OCI-LY7 (cell line): ENCODE measurements at regions of chr5 and their contacts with region 1.

Region 1: GRCh38 chr5:150409638-150410523 is 2.8 kb downstream of the CD74 start:
- DNase-seq: peak; percentile 84
- H3K4me3 ChIP-seq: peak overlapping the region; percentile 99
- H3K27ac ChIP-seq: peak overlapping the region; percentile 97
- H3K4me1 ChIP-seq: peaks cover 71% of the 10 kb centered on the region
- CTCF ChIP-seq: no peak

Region 2: DNA sequence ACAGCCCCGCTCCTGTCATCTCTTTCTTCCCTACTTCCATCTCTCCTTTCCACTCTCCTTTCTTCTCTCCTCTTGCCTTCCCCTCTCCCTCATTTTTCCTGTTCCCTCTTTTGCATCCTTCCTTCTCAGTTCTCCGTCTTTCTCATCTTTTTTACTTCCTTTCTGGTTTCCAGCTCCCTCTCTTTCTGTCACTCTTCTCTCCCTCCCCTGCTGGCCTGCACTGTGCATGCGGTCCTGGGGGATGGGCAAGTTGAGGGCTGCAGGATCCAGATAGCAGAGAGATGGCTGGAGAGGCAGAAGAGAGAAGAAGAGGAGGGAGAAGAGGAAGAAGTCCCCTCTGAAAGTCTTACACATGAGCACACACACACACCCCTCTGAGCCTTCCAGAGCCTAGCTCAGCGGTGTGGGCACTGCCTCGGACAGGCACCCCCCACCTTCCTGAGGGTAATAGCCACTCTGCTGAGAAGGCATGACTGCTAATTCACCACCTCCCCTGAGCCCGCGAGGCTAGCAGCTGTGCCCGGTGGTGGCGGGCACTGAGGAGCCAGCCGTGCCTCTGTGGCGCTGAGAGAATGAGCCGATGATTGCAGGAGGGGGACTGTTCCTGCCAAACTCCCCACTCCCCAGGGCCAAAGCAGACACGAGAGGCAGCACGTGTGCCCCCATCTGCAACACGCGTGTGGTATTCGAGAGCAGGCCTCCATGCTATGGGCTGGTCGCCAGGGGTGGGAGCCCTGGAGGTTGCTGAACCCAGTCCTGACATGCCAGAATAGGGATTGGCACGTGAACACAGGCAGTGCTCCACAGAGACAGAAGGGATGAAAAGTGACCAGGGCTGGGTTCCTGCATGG is 116.6 kb before region 1 on chr5:
- CTCF ChIA-PET with region 1: no interaction called
- POLR2A ChIA-PET with region 1: no interaction called
- intact Hi-C with region 1: no loop called
- DNase-seq: no peak
- H3K4me3 ChIP-seq: no peak overlapping the region
- H3K27ac ChIP-seq: no peak overlapping the region
- H3K4me1 ChIP-seq: no peaks in the 10 kb centered on the region
- CTCF ChIP-seq: no peak

Region 3: GRCh38 chr5:150357326-150358260 is 52.3 kb before region 1 on chr5 and contains the start of gene TCOF1:
- CTCF ChIA-PET with region 1: no interaction called
- POLR2A ChIA-PET with region 1: interaction called, 4 read pairs
- intact Hi-C with region 1: loop called (anchors 1 kb)
- DNase-seq: peak; percentile 99
- H3K4me3 ChIP-seq: peak within 1 kb of the TSS; percentile 93
- H3K27ac ChIP-seq: peak within 1 kb of the TSS; percentile 54
- H3K4me1 ChIP-seq: peaks cover 38% of the 10 kb centered on the region
- CTCF ChIP-seq: no peak
- total RNA-seq, gene TCOF1: 61.3 and 62.9 TPM in 2 replicates

Region 4: DNA sequence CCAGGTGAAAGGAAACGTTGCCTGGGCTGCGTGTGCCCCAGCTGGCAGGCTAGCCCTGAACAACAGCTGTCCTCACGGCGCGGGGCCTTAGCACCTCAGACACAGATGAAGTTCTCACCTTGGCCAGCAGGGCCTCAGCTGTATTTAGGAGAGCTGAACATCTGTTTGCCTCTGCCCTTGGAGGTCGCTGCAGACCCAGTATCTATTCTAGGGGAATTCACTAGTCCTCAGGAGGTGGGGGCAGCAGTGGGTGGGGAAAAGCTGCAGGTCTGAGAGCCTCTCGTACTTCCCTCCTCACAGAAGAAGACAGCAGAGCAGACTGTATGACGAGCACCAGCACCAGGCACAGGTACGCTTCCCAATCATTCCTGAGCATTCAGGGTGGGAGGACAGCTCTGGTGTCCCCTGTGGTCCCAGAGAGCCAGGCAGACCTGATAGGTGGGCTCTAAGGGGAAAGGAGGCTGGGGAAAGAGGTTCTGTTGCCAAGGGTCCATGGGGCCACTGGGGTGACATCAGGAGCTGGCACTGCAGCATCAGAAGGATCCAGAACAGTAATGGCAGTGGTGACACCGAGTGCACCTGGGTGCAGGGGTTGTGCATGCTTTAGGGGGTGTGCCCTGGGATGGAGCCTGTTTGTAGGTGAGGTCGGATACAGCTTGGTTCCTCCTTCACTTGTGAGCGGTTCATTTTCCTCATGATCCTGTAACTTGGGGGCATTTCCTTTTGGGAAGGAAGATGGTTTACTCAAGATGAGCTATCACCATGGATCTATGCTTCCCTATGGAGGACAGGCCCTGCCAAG is 11.0 kb before region 1 on chr5:
- CTCF ChIA-PET with region 1: interaction called, 10 read pairs
- POLR2A ChIA-PET with region 1: interaction called, 33 read pairs
- intact Hi-C with region 1: no loop called
- DNase-seq: peak; percentile 89
- H3K4me3 ChIP-seq: no peak overlapping the region
- H3K27ac ChIP-seq: peak overlapping the region; percentile 36
- H3K4me1 ChIP-seq: peaks cover 29% of the 10 kb centered on the region
- CTCF ChIP-seq: peak; percentile 91

Region 5: DNA sequence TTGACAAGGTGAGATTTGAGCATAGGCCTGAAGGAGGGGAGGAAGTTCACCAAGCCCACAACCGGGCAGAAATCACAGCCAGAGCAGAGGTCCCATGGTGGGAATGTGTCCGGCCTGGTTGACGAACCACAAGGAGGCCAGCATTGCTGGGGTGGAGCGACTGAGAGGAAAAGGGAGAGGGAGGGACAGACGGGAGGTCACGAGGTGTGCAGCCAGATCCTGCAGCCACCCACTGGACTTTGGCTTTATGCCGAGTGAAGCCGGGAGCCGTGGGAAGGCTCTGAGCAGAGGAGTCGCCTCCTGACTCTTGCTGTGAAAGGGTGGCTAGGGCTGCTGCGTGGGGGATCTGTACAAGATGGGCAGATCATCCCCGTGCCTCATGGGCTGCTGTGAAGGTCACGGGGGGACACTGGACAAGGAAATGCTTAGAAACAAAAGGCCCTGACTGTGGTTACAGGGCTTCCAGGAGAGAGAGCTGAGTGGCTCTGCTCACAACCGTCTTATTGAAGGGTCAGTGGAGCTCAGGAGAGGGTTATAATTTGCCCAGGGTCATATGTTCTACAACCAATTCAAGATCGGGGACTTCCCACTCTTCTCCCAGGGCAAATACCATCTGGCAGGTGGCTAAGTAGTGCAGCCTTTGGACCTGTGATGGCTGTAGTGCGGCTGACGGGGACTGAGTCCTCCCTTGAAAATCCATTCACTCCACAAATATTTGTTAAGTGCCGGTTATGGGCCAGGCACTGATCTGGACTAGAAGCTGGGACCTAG is 18.4 kb after region 1 on chr5:
- CTCF ChIA-PET with region 1: interaction called, 3 read pairs
- POLR2A ChIA-PET with region 1: interaction called, 38 read pairs
- intact Hi-C with region 1: no loop called
- DNase-seq: no peak
- H3K4me3 ChIP-seq: no peak overlapping the region
- H3K27ac ChIP-seq: no peak overlapping the region
- H3K4me1 ChIP-seq: peaks cover 7% of the 10 kb centered on the region
- CTCF ChIP-seq: no peak

Region 6: GRCh38 chr5:150436141-150436680 is 26.3 kb after region 1 on chr5:
- CTCF ChIA-PET with region 1: interaction called, 5 read pairs
- POLR2A ChIA-PET with region 1: interaction called, 24 read pairs
- intact Hi-C with region 1: loop called (anchors 1 kb)
- DNase-seq: peak; percentile 94
- H3K4me3 ChIP-seq: no peak overlapping the region
- H3K27ac ChIP-seq: no peak overlapping the region
- H3K4me1 ChIP-seq: peaks cover 11% of the 10 kb centered on the region
- CTCF ChIP-seq: peak; percentile 95

Region 7: GRCh38 chr5:150636401-150637244 is 226.7 kb after region 1 on chr5:
- CTCF ChIA-PET with region 1: no interaction called
- POLR2A ChIA-PET with region 1: no interaction called
- intact Hi-C with region 1: no loop called
- DNase-seq: no peak
- H3K4me3 ChIP-seq: no peak overlapping the region
- H3K27ac ChIP-seq: no peak overlapping the region
- H3K4me1 ChIP-seq: no peaks in the 10 kb centered on the region
- CTCF ChIP-seq: no peak

Region 8: DNA sequence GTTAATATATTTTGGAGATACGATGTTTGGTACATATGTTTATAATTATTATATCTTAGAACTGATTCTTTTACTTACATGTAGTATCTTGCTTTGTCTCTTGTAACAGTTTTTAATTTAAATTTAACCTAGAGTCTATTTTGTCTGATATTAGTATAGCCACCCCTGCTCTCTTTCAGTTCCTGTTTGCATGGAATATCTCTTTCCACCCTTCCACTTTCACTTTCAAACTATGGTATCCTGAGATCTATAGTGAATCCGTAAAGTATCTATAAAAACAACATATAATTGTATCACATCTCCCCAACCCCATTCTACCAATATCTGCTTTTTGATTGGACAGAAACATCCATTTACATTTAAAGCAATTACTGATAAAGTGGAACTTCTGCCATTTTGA is 443.7 kb after region 1 on chr5:
- CTCF ChIA-PET with region 1: no interaction called
- POLR2A ChIA-PET with region 1: no interaction called
- intact Hi-C with region 1: no loop called
- DNase-seq: no peak
- H3K4me3 ChIP-seq: no peak overlapping the region
- H3K27ac ChIP-seq: no peak overlapping the region
- H3K4me1 ChIP-seq: no peaks in the 10 kb centered on the region
- CTCF ChIP-seq: no peak

Region 9: DNA sequence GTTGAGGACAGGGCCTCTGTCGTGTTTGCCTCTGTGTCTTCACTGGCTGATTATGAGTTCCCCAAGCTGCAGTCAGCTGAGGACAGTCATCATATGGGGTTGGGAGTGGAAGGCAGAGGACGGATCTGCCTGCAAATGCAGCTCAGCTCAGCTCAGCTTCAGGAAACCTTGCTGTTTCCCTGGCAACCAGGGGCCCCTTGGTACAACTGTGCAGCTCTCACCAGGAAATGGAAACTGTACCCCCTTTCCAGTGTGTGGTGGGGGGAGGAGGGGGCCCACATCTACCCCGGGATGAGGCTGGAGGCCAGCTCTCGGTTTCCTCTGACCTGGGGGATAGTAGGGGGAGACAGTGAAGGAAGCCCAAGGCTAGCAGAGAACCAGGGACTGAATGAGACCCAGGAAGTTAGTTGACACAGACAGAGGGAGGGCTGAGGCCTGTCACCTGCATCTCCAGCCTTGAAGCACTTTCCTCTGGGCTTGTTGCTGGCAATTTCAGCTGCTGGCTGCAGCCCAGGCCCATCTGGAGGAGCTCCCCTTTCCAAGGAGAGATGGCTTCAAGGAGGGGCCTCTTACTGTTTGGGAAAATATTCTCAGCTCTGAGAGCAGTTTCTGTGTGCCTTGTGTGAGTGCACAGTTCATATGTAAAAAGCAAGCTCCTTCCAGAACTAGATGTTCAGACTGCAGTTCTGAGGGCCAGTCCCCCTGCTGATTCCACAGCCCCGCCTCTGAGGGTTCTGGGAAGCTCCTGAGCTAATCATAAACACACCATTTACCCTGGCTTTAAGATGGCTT is 740.8 kb after region 1 on chr5:
- CTCF ChIA-PET with region 1: no interaction called
- POLR2A ChIA-PET with region 1: interaction called, 3 read pairs
- intact Hi-C with region 1: loop called (anchors 5 kb)
- DNase-seq: peak; percentile 81
- H3K4me3 ChIP-seq: peak overlapping the region; percentile 31
- H3K27ac ChIP-seq: peak overlapping the region; percentile 90
- H3K4me1 ChIP-seq: peaks cover 79% of the 10 kb centered on the region
- CTCF ChIP-seq: no peak